WTC11 (cell line): ENCODE measurements at regions of chr19 and their contacts with region 1.

Region 1: GRCh38 chr19:680287-681028 is 4.3 kb downstream of the FSTL3 start:
- DNase-seq: peak; percentile 100
- ATAC-seq: peak; percentile 71
- H3K4me3 Mint-ChIP-seq: peak overlapping the region; percentile 87
- H3K27ac Mint-ChIP-seq: peak overlapping the region; percentile 100
- H3K4me1 Mint-ChIP-seq: no peaks in the 10 kb centered on the region
- H3K27me3 Mint-ChIP-seq: peaks cover 18% of the 10 kb centered on the region
- CTCF ChIP-seq: no peak

Region 2: DNA sequence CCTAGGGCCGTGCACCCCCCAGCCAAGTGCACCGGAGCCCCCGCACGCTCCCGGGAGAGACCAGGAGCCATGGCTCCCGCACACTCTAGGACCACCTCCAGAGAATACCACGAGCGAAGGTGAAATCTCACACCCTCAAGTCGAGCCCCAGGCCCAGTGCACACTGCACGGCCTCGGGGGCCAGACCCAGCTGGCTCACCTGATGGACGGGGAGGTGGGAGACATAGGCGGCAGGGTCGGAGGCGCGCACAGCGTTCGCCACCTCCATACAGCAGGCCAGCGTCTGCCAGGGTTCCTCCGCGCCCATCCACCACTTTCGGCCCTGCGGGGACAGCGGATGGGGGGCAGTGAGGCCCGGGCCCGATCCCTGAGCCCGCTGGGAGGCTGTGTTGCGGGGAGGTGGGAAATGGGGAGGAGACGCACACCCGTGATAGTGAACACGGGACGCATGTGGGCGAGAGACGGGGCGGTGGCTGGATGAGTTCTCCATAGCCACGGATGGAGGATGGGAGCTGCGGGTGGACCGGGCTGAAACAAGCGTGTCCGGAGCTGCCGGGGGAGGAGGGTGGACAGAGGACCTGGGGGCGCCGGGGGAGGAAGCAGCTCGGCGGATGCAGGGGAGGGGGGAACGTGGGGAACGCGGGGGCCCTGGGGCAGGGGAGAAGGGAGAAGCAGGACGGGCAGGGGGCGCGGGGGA is 60.1 kb before region 1 on chr19:
- CTCF ChIA-PET with region 1: no interaction called
- POLR2A ChIA-PET with region 1: no interaction called
- DNase-seq: no peak
- ATAC-seq: no peak
- H3K4me3 Mint-ChIP-seq: no peak overlapping the region
- H3K27ac Mint-ChIP-seq: no peak overlapping the region
- H3K4me1 Mint-ChIP-seq: no peaks in the 10 kb centered on the region
- H3K27me3 Mint-ChIP-seq: no peaks in the 10 kb centered on the region
- CTCF ChIP-seq: no peak

Region 3: DNA sequence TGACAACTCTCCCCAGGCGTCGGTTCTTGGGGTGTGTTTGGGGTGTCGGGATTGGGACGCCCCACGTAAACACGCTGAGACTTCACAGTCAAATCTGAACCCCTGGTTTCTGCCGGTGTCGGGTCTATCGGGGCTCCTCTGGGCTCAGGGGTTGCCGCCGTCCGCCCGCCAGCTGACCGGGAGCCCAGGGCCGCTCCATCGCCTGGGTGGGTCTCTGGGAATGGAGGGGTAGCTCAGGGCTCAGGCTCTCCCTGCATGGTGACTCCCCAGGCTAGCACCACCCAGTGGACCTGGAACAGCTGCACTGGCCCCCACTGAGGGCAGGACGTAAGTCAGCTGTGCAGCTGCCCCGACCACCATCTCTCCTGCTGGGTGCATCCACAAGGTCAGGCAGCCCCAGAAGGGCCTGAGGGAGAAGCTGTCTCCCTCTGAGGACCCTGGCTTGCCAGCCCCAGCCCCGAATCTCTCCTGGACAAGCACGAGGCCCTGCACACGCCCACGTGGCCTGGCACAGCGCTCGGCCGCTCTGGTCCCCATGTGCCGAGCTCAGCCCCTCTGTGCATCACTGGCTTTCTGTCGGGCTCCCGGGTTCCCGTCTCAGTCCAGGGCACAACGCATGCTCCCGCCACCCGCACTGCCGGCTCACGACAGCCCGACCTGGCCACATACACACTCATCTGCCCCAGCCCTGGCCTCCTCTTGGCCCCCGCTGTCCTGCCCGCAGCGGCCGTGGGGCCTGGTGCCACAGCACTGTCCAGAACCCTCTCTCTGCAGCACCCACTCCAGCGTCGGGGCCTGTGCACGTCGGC is 23.5 kb before region 1 on chr19:
- CTCF ChIA-PET with region 1: no interaction called
- POLR2A ChIA-PET with region 1: no interaction called
- DNase-seq: no peak
- ATAC-seq: no peak
- H3K4me3 Mint-ChIP-seq: no peak overlapping the region
- H3K27ac Mint-ChIP-seq: no peak overlapping the region
- H3K4me1 Mint-ChIP-seq: peaks cover 16% of the 10 kb centered on the region
- H3K27me3 Mint-ChIP-seq: no peaks in the 10 kb centered on the region
- CTCF ChIP-seq: no peak

Region 4: DNA sequence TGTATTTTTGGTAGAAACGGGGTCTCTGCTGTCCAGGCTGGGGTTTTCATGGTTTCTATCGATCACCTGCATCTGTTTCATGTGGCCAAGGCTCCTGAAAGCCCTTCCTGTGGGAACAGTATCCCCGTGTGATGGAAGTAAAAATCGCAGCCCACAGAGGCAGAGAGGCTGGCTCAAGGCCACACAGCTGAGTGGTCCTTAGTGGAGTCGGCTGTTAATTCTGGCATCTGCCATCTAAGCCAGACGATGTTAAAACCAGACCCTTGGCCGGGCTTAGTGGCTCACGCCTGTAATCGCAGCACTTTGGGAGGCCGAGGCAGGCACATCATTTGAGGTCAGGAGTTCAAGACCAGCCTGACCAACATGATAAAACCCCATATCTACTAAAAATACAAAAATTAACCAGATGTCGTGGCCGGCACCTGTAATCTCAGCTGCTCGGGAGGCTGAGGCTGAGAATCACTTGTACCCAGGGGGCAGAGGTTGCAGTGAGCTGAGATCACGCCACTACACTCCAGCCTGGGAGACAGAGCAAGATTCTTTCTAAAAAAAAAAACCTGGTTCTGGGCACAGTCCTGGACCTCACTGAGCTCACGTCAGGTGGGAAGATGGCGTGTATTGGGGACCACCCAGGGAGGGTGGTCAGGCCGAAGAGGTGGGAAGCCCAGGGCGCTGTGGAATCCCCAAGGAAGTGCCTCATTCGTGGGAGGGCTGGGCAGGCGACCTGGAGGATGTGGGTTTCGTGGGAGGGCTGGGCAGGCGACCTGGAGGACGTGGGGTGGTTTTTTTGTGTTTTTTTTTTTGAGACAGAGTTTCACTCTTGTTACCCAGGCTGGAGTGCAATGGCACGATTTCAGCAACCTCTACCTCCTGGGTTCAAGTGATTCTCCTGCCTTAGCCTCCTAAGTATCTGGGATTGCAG is 52.0 kb after region 1 on chr19:
- CTCF ChIA-PET with region 1: interaction called, 20 read pairs
- POLR2A ChIA-PET with region 1: no interaction called
- DNase-seq: no peak
- ATAC-seq: no peak
- H3K4me3 Mint-ChIP-seq: no peak overlapping the region
- H3K27ac Mint-ChIP-seq: no peak overlapping the region
- H3K4me1 Mint-ChIP-seq: no peaks in the 10 kb centered on the region
- H3K27me3 Mint-ChIP-seq: no peaks in the 10 kb centered on the region
- CTCF ChIP-seq: no peak

Region 5: GRCh38 chr19:741506-742131 is 61.2 kb after region 1 on chr19:
- CTCF ChIA-PET with region 1: interaction called, 10 read pairs
- POLR2A ChIA-PET with region 1: interaction called, 3 read pairs
- DNase-seq: peak; percentile 68
- ATAC-seq: peak; percentile 68
- H3K4me3 Mint-ChIP-seq: no peak overlapping the region
- H3K27ac Mint-ChIP-seq: no peak overlapping the region
- H3K4me1 Mint-ChIP-seq: no peaks in the 10 kb centered on the region
- H3K27me3 Mint-ChIP-seq: no peaks in the 10 kb centered on the region
- CTCF ChIP-seq: no peak